CD8-positive, alpha-beta T cell (primary cell): ENCODE measurements at regions of chr11 and their contacts with region 1.

Region 1: GRCh38 chr11:93197380-93198214 is at the start of gene SLC36A4:
- DNase-seq: peak; percentile 70 to 94 (median 86)
- ATAC-seq: peak; percentile 88
- H3K4me3 ChIP-seq: peak within 1 kb of the TSS; percentile 69 to 85
- H3K4me3 Mint-ChIP-seq: peak within 1 kb of the TSS; percentile 97
- H3K27ac ChIP-seq: peak within 1 kb of the TSS; percentile 72 to 93
- H3K27ac Mint-ChIP-seq: peak within 1 kb of the TSS; percentile 96
- H3K4me1 ChIP-seq: peaks cover 6% of the 10 kb centered on the region
- H3K4me1 Mint-ChIP-seq: peaks cover 31% of the 10 kb centered on the region
- H3K27me3 ChIP-seq: no peaks in the 10 kb centered on the region
- H3K27me3 Mint-ChIP-seq: no peaks in the 10 kb centered on the region
- CTCF ChIP-seq: no peak
- total RNA-seq, gene SLC36A4: 16.8 to 17.6 TPM

Region 2: DNA sequence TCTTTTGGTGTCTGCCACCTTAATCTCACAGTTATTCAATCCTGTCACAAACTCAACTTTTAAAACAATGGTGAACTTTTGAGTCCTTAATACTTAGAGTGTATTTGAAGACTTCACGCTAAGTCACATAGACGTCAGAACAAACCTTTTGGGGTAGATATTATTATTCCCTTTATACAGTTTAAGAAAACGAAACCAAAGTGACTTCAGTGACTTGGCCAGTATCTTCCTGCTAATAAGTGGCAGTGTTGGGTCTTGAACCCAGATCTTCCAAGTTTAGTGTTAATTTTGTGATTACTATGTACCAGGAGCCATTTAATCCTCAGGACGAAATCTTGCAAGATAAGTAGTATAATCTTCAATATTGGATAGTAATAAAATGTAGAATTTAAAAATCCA is 464.6 kb after region 1 on chr11:
- CTCF ChIA-PET with region 1: no interaction called
- POLR2A ChIA-PET with region 1: no interaction called
- intact Hi-C with region 1: loop called in 1 of 2 experiments (anchors 1 kb)
- DNase-seq: no peak
- ATAC-seq: no peak
- H3K4me3 ChIP-seq: peak overlapping the region; percentile 73 to 99
- H3K4me3 Mint-ChIP-seq: peak overlapping the region; percentile 86
- H3K27ac ChIP-seq: peak overlapping the region; percentile 75 to 97
- H3K27ac Mint-ChIP-seq: peak overlapping the region; percentile 90
- H3K4me1 ChIP-seq: peaks cover 6% of the 10 kb centered on the region
- H3K4me1 Mint-ChIP-seq: peaks cover 38% of the 10 kb centered on the region
- H3K27me3 ChIP-seq: no peaks in the 10 kb centered on the region
- H3K27me3 Mint-ChIP-seq: no peaks in the 10 kb centered on the region
- CTCF ChIP-seq: no peak

Region 3: DNA sequence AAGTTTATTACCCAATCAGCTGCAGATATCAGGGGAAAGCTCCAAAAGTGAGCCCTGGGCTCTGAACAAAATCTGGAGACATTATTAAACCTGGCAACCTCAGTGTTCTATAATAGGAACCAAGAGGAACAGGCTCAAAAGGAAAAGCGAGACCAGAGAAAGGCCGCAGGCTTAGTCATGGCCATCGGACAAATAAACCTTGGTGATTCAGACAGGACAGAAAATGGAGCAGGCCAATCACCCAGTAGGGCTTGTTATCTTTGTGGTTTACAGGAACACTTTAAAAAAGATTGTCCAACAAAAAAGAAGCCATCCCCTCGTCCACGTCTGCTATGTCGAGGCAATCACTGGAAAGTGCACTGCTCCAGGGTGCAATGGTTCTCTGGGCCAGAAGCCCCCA is 923.3 kb after region 1 on chr11:
- CTCF ChIA-PET with region 1: no interaction called
- POLR2A ChIA-PET with region 1: no interaction called
- intact Hi-C with region 1: loop called in 1 of 2 experiments (anchors 5 kb)
- DNase-seq: no peak
- ATAC-seq: no peak
- H3K4me3 ChIP-seq: no peak overlapping the region
- H3K4me3 Mint-ChIP-seq: no peak overlapping the region
- H3K27ac ChIP-seq: no peak overlapping the region
- H3K27ac Mint-ChIP-seq: no peak overlapping the region
- H3K4me1 ChIP-seq: no peaks in the 10 kb centered on the region
- H3K4me1 Mint-ChIP-seq: no peaks in the 10 kb centered on the region
- H3K27me3 ChIP-seq: no peaks in the 10 kb centered on the region
- H3K27me3 Mint-ChIP-seq: peaks cover 9% of the 10 kb centered on the region
- CTCF ChIP-seq: no peak

Region 4: DNA sequence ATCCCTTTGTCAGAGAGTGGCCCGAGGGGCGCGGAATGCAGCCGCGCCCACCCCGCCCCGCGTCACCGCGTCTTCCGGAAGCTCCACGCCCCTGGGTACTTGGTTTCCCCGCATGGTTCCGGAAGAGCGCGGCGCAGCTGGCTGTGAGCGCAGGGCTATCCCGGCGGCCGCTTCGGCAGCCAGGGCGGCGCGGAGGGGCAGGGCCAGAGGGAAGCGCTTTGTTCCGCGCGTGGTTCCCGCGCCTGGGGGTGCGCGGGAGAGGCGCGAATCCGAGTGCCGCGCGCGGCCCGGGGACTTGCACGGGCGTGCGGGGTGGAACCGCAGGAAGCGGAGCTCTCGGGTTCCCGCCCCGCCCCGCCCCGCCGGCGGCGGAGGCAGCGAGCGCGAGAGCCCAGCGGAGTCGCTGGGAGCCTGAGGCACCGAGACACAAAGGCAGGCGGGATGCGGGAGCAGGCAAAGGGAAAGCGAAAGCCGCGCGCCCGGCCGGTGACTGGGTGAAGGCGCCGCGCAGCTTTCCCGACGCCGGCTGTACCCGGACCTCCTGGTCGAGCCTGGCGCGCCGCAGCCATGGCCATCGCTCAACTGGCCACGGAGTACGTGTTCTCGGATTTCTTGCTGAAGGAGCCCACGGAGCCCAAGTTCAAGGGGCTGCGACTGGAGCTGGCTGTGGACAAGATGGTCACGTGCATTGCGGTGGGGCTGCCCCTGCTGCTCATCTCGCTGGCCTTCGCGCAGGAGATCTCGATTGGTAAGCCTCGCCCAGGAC is 931.3 kb after region 1 on chr11 and contains the start of gene PANX1:
- CTCF ChIA-PET with region 1: no interaction called
- POLR2A ChIA-PET with region 1: no interaction called
- intact Hi-C with region 1: loop called (anchors 2 to 5 kb)
- DNase-seq: peak; percentile 41 to 94 (median 75)
- ATAC-seq: peak; percentile 83
- H3K4me3 ChIP-seq: peak within 1 kb of the TSS; percentile 91 to 95
- H3K4me3 Mint-ChIP-seq: no peak within 1 kb of the TSS
- H3K27ac ChIP-seq: peak within 1 kb of the TSS; percentile 85 to 95
- H3K27ac Mint-ChIP-seq: peak within 1 kb of the TSS; percentile 92
- H3K4me1 ChIP-seq: peaks cover 34% of the 10 kb centered on the region
- H3K4me1 Mint-ChIP-seq: peaks cover 26% of the 10 kb centered on the region
- H3K27me3 ChIP-seq: no peaks in the 10 kb centered on the region
- H3K27me3 Mint-ChIP-seq: no peaks in the 10 kb centered on the region
- CTCF ChIP-seq: no peak
- total RNA-seq, gene PANX1: 8.3 to 9.3 TPM